ENCODE measurements at regions of chr1 and their contacts with region 1.

Region 1: DNA sequence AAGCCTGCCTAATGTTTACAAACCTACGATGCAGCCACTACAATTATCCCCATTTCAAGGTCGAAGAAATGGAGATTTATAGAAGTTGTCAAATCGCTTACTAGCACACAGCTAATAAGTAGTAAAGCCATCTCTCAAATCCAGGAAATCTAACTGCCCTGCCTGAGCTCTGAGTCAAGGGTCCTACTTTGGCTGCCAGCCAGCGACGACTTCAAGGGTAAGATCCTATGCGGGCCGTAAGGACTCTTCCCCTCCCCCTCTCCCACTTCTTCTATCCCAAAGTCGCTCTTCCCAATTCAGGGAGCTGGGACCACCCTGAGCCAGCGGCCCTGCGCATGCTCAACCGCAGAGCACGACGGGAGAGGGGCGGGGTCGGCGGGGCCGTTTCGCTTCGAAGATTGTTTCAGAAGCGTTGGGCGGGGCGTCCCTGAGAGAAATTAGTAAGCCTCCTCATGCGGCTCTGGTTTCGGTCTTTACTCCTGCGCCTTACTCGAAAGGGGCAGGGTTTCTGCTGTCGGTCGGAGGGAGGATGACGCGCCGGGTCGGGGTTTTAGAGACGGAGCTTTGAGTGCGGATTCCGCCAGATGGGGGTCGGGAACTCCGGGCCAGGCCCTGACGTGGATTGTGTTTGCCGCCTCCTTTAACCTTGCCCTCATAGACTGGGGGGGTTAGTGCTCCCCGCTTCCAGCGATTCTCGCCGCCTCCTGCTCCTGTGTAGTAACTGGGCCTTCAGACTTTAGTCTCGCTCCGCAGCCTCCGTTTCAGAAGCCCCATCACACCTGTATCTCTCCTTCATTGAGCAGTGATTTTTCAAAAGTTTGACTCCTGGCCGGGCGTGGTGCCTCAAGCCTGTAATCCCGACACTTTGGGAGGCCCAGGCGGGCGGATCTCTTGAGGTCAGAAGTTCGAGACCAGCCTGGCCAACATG is at the start of gene ZMYM1:
- DNase-seq: peak; percentile 49 to 89 (median 84)
- ATAC-seq: peak; percentile 92
- H3K4me3 ChIP-seq: peak within 1 kb of the TSS; percentile 82 to 83
- H3K4me3 Mint-ChIP-seq: peak within 1 kb of the TSS; percentile 98
- H3K27ac ChIP-seq: peak within 1 kb of the TSS; percentile 85 to 95
- H3K27ac Mint-ChIP-seq: peak within 1 kb of the TSS; percentile 99
- H3K4me1 ChIP-seq: peaks cover 16% of the 10 kb centered on the region
- H3K4me1 Mint-ChIP-seq: peaks cover 37% of the 10 kb centered on the region
- H3K27me3 ChIP-seq: no peaks in the 10 kb centered on the region
- H3K27me3 Mint-ChIP-seq: peaks cover 8% of the 10 kb centered on the region
- CTCF ChIP-seq: no peak
- total RNA-seq, gene ZMYM1: 3.7 to 6.0 TPM

Region 2: GRCh38 chr1:34984793-34985608 is 94.3 kb before region 1 on chr1 and contains the start of gene TMEM35B:
- CTCF ChIA-PET with region 1: interaction called, 4 read pairs
- POLR2A ChIA-PET with region 1: interaction called, 3 read pairs
- intact Hi-C with region 1: loop called (anchors 2 kb)
- DNase-seq: peak; percentile 55 to 87 (median 82)
- ATAC-seq: peak; percentile 96
- H3K4me3 ChIP-seq: peak within 1 kb of the TSS; percentile 77 to 81
- H3K4me3 Mint-ChIP-seq: peak within 1 kb of the TSS; percentile 99
- H3K27ac ChIP-seq: peak within 1 kb of the TSS; percentile 80 to 87
- H3K27ac Mint-ChIP-seq: peak within 1 kb of the TSS; percentile 98
- H3K4me1 ChIP-seq: peaks cover 28% of the 10 kb centered on the region
- H3K4me1 Mint-ChIP-seq: peaks cover 42% of the 10 kb centered on the region
- H3K27me3 ChIP-seq: no peaks in the 10 kb centered on the region
- H3K27me3 Mint-ChIP-seq: no peaks in the 10 kb centered on the region
- CTCF ChIP-seq: no peak
- total RNA-seq, gene TMEM35B: 1.0 to 2.6 TPM

Region 3: DNA sequence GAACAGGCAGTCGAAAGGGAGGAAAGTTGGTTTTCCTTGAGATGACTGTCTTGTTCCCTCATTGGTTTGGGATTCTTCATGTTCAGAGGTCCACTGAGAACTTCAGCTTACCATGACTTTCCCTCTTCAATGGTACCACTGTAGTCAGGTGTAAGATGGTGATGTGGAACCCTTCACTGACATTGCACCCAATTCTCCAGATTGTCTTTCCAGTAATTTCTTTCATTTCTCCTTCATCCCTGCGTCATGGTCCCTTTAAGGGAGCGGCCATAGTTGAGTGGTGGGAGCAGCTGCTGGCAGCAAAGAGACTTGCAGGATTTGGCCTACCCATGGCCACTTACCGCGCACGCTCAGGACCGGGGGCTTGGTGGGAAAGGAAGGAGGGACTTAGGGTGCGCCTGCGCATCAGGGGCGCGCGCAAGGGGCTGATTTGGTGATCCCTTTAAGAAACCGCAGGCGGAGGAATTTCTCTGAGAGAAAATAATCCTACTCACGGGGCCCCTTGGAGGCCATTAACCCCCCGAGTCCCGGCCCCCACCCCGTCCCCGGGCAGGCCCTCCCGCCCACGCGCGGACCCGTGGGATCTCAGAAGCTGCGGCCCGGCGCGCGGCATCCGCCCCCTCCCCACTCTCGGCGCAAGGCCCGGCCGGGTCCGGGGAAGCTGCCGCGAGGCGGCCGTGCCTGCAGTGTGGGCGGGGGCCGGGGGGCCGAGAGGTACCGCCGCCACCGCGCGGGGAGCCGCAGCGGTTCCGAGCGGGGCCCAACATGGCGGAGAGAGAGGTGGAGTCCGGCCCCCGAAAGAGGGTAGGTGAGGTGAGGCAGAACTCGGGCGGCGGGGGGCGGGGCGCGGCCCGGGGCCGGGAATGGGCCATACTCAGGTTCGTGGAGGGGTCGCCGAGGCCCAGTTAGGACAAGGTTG is 189.3 kb after region 1 on chr1 and contains the start of gene ZMYM4:
- CTCF ChIA-PET with region 1: no interaction called
- POLR2A ChIA-PET with region 1: no interaction called
- intact Hi-C with region 1: loop called in 1 of 2 experiments (anchors 10 kb)
- DNase-seq: peak; percentile 70 to 96 (median 88)
- ATAC-seq: peak; percentile 95
- H3K4me3 ChIP-seq: peak within 1 kb of the TSS; percentile 65 to 73
- H3K4me3 Mint-ChIP-seq: peak within 1 kb of the TSS; percentile 89
- H3K27ac ChIP-seq: peak within 1 kb of the TSS; percentile 40 to 68
- H3K27ac Mint-ChIP-seq: peak within 1 kb of the TSS; percentile 93
- H3K4me1 ChIP-seq: peaks cover 14% of the 10 kb centered on the region
- H3K4me1 Mint-ChIP-seq: peaks cover 38% of the 10 kb centered on the region
- H3K27me3 ChIP-seq: no peaks in the 10 kb centered on the region
- H3K27me3 Mint-ChIP-seq: peaks cover 10% of the 10 kb centered on the region
- CTCF ChIP-seq: no peak
- total RNA-seq, gene ZMYM4: 32.1 to 36.5 TPM

Region 4: GRCh38 chr1:35568975-35569395 is 489.7 kb after region 1 on chr1:
- CTCF ChIA-PET with region 1: no interaction called
- POLR2A ChIA-PET with region 1: no interaction called
- intact Hi-C with region 1: no loop called
- DNase-seq: peak; percentile 39 to 81 (median 66)
- ATAC-seq: peak; percentile 76
- H3K4me3 ChIP-seq: no peak overlapping the region
- H3K4me3 Mint-ChIP-seq: no peak overlapping the region
- H3K27ac ChIP-seq: no peak overlapping the region
- H3K27ac Mint-ChIP-seq: no peak overlapping the region
- H3K4me1 ChIP-seq: no peaks in the 10 kb centered on the region
- H3K4me1 Mint-ChIP-seq: peaks cover 17% of the 10 kb centered on the region
- H3K27me3 ChIP-seq: no peaks in the 10 kb centered on the region
- H3K27me3 Mint-ChIP-seq: no peaks in the 10 kb centered on the region
- CTCF ChIP-seq: peak; percentile 91

Measured in CD8-positive, alpha-beta T cell (primary cell).